ENCODE measurements at regions of chr16 and their contacts with region 1.

Region 1: GRCh38 chr16:69123910-69124309 is 8.5 kb downstream of the CHTF8 start:
- DNase-seq: peak; percentile 75
- CTCF ChIP-seq: peak; percentile 65

Region 2: GRCh38 chr16:68460067-68460466 is 663.8 kb before region 1 on chr16:
- in situ Hi-C with region 1: no loop called
- DNase-seq: no peak
- CTCF ChIP-seq: no peak

Region 3: GRCh38 chr16:68704232-68704867 is 419.6 kb before region 1 on chr16:
- in situ Hi-C with region 1: loop called (anchors 25 kb)
- DNase-seq: peak; percentile 78
- CTCF ChIP-seq: peak; percentile 86

Region 4: DNA sequence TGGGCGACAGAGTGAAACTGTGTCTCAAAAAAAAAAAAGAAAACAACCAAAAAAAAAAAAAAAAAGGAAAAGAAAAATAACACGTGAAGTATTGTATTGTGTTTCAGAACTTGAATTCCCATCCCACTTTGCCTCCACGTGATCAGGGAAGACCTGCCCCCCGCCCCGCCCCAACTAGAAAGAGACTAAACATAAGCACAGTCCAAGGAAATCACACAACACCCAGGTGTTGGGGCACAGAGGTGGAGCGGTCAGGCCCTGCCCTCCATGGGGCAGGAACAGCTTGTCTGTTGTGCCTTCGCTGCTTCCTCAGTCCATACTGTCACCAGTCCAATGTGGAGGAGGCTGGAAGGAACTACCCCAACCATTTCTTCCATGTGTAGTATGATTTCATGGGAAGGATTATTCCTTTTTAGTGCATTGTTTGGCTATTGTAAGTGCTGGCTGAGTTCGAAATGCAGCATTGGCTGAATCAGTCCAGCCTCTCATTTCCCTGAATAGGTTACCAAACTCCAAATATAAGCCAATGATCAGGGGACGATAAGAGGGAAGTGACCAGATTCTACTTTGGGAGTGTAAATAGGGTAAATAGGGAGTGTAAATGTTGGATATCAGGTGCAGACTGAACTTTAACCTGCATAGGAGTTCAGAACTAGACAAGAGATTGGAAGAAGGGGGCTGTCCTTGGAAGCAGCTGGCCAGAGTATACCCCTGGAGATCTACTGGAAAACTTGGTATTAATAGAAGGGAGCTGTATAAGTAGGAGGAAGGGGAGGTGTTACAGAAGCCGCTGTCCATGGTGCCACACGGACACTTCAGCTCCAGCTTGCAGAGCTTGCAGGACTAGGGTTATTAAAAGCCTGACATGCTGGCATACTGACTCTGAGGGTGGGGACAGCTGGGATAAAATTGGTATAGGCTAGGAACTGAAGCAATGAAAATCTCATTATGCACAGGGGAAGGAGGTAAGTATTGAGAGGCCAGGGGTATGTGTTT is 229.9 kb before region 1 on chr16:
- in situ Hi-C with region 1: loop called (anchors 10 kb)
- DNase-seq: no peak
- CTCF ChIP-seq: no peak

Measured in GM13977 (cell line).